ENCODE measurements at regions of chr6 and their contacts with region 1.

Region 1: DNA sequence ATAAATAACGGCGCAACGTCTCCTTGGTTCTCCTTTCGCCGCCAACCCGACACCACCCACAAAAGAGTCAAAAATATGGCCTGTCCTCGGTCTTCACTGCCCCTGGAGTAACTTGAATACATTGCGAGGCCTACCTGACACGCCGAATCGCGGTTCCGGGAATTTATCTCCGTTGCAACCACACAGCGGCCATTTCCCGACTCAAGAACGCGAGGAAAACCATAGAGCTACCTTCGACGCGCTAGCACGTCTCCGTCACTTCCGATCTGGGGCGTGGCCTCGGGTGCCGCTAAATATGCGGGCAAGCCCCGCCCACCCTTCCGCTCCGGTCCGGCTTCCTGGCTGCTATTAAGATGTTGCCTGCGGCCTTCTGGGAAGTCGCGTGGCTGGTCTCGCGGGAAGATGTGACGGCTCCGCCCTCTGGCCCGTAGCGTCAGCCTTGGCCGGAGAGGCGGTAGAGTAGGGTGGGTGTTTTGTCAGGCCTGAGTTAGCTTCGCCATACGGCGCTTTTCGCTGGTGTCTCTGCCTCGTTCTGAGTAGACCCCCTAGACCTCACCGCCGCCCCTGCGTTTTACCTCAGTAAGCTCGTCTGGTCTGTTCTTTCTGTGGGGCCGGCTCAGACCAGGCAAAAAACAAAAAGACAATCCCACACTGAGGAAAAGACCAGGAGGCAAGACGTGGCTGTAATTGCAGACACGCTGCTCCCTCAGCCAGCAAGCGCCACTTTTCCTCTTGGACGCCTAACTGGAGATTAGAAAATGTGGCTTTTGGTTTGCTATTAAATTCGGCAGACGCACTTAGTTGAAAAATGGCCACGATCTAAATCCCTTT is at the start of gene BCLAF1:
- DNase-seq: peak; percentile 95 to 100 (median 96)
- ATAC-seq: peak; percentile 93
- H3K4me3 ChIP-seq: peak within 1 kb of the TSS; percentile 75
- H3K27ac ChIP-seq: peak within 1 kb of the TSS; percentile 100
- H3K4me1 ChIP-seq: peaks cover 13 to 14% of the 10 kb centered on the region in 2 experiments
- H3K27me3 ChIP-seq: no peaks in the 10 kb centered on the region
- CTCF ChIP-seq: no peak
- EP300 ChIP-seq: peak; percentile 37; the same call in 1 of the 2 replicates
- POLR2A ChIP-seq: peak; percentile 99
- RAD21 ChIP-seq: peak in 1 of 2 experiments; percentile 30; a peak in 1 of 4 replicates
- polyA plus RNA-seq, gene BCLAF1: 65.4 to 87.3 TPM

Region 2: GRCh38 chr6:136249811-136250685 is 39.7 kb before region 1 on chr6 and contains the start of gene MTFR2:
- CTCF ChIA-PET with region 1: no interaction called
- POLR2A ChIA-PET with region 1: interaction called, 176 read pairs
- in situ Hi-C with region 1: no loop called
- intact Hi-C with region 1: loop called (anchors 2 kb)
- DNase-seq: peak; percentile 100
- ATAC-seq: peak; percentile 93
- H3K4me3 ChIP-seq: peak within 1 kb of the TSS; percentile 88
- H3K27ac ChIP-seq: peak within 1 kb of the TSS; percentile 82
- H3K4me1 ChIP-seq: peaks cover 0 to 20% of the 10 kb centered on the region in 2 experiments; a peak in 2 of 5 replicates
- H3K27me3 ChIP-seq: no peaks in the 10 kb centered on the region
- CTCF ChIP-seq: no peak
- EP300 ChIP-seq: peak; percentile 45
- POLR2A ChIP-seq: peak; percentile 93
- RAD21 ChIP-seq: 0 out of 4 replicates have a peak, but pooled peaks have one; percentile 9 to 12
- polyA plus RNA-seq, gene MTFR2: 45.9 to 49.7 TPM

Region 3: DNA sequence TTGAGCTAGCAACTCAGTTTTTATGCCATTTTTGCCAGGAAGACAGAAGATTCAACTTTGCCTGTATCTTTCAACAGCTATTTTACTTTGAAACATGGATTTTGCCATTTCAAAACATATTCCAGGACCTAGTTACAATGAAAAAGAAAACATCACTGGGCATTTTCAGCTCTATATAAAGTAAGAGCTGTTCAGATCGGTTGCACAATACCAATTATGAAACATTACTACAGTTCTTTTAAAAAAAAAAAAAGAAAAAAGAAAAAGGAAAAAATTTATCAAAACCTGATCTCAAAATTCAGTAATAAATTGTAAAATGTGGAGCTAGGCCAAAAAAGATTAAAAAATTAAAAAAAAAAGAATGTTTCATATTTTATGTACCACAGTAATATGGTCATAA is 15.7 kb before region 1 on chr6:
- CTCF ChIA-PET with region 1: no interaction called
- POLR2A ChIA-PET with region 1: interaction called, 48 read pairs
- in situ Hi-C with region 1: no loop called
- intact Hi-C with region 1: no loop called
- DNase-seq: no peak
- ATAC-seq: no peak
- H3K4me3 ChIP-seq: no peak overlapping the region
- H3K27ac ChIP-seq: no peak overlapping the region
- H3K4me1 ChIP-seq: no peaks in the 10 kb centered on the region
- H3K27me3 ChIP-seq: no peaks in the 10 kb centered on the region
- CTCF ChIP-seq: no peak
- EP300 ChIP-seq: no peak
- POLR2A ChIP-seq: 0 out of 2 replicates have a peak, but pooled peaks have one; percentile 25
- RAD21 ChIP-seq: no peak

Region 4: GRCh38 chr6:136317021-136317694 is 27.4 kb after region 1 on chr6:
- CTCF ChIA-PET with region 1: no interaction called
- POLR2A ChIA-PET with region 1: interaction called, 22 read pairs
- in situ Hi-C with region 1: no loop called
- intact Hi-C with region 1: loop called (anchors 2 kb)
- DNase-seq: peak; percentile 64 to 82 (median 67)
- ATAC-seq: peak; percentile 91
- H3K4me3 ChIP-seq: no peak overlapping the region
- H3K27ac ChIP-seq: no peak overlapping the region
- H3K4me1 ChIP-seq: no peaks in the 10 kb centered on the region
- H3K27me3 ChIP-seq: peaks cover 4 to 6% of the 10 kb centered on the region in 2 experiments; a peak in 4 of 5 replicates
- CTCF ChIP-seq: peak; percentile 75 to 95 (median 84)
- EP300 ChIP-seq: no peak
- POLR2A ChIP-seq: no peak
- RAD21 ChIP-seq: peak; percentile 83 to 95

Region 5: DNA sequence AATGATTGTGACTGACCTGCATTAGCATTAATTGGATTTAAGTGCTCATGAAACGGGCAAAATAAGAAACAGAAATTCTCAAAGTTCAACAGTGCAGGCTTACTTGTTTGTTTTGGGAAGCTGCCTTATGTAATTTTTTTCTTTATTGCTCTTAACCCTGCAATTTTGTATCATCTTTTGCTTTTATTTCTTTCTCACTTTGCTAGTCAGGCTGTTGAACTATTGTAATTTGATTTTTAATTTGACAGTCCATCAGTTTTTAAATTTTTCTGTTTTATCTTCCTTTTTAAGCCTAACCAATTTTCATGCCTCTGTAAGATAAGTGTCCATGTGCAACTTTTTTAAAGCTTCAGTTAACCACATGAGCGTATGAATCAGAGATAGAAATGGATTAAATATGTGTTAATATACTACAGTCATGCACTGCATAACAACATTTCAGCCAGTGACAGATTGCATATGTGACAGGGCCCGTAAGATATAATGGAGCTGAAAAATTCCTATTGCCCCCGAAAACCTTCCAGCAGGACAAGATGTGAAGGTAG is 577.1 kb after region 1 on chr6:
- CTCF ChIA-PET with region 1: no interaction called
- POLR2A ChIA-PET with region 1: no interaction called
- in situ Hi-C with region 1: no loop called
- intact Hi-C with region 1: no loop called
- DNase-seq: no peak
- ATAC-seq: no peak
- H3K4me3 ChIP-seq: no peak overlapping the region
- H3K27ac ChIP-seq: no peak overlapping the region
- H3K4me1 ChIP-seq: no peaks in the 10 kb centered on the region
- H3K27me3 ChIP-seq: no peaks in the 10 kb centered on the region
- CTCF ChIP-seq: no peak
- EP300 ChIP-seq: no peak
- POLR2A ChIP-seq: no peak
- RAD21 ChIP-seq: no peak

Measured in K562 (cell line).